Common myeloid progenitor, CD34-positive (primary cell): ENCODE measurements at regions of chr11 and their contacts with region 1.

Region 1: DNA sequence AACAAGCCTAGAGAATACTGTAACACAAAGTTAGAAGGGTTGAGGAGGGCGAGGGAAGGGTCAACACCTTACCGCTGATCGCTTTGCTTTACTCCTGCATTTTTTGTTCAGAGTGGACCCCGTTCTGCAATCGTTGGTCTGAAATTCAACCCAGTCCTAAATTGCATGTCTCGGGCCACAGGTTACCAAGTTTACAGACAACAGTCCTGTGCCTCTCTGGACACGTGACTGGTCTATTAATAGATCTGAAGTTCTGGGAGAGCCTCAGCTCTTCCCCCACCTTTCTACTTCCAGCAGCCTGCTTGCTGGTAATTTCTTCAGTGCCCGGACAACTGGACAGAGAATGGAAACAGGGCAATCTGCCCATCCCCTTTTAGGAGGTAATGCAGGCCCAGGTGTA is 74.2 kb downstream of the STIM1 start:
- DNase-seq: no peak
- H3K4me3 ChIP-seq: no peak overlapping the region
- H3K27ac ChIP-seq: no peak overlapping the region
- H3K4me1 ChIP-seq: peaks cover 6 to 22% (median 10%) of the 10 kb centered on the region in 4 experiments
- H3K27me3 ChIP-seq: no peaks in the 10 kb centered on the region

Region 2: DNA sequence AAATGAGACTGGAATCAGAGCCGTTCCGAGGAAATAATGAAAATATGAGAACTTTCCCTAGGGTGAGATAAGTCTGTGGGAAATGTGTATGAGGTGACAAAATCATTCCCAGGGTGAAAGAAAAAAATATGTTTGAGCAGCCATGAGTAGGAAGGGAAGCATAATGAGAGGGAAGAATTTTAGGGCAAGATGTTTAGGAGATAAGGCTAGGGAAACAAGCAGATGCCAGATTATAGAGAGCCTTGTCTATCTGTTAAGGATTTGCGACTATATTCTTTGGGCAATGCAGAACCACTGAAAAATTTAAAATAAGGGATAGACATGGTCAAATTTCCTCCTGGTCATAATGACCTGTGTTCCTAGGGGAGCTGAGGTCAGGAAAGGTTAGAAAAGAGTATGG is 19.7 kb before region 1 on chr11:
- CTCF ChIA-PET with region 1: interaction called, 12 read pairs
- POLR2A ChIA-PET with region 1: no interaction called
- DNase-seq: no peak
- H3K4me3 ChIP-seq: no peak overlapping the region
- H3K27ac ChIP-seq: no peak overlapping the region
- H3K4me1 ChIP-seq: peaks cover 1 to 21% (median 14%) of the 10 kb centered on the region in 4 experiments
- H3K27me3 ChIP-seq: no peaks in the 10 kb centered on the region